HepG2 (cell line): ENCODE measurements at regions of chrX and their contacts with region 1.

Region 1: GRCh38 chrX:48751343-48751742 is 10.2 kb upstream of the GLOD5 start:
- DNase-seq: no peak
- ATAC-seq: no peak
- H3K4me3 ChIP-seq: no peak overlapping the region
- H3K27ac ChIP-seq: no peak overlapping the region
- H3K4me1 ChIP-seq: peaks cover 52% of the 10 kb centered on the region
- H3K27me3 ChIP-seq: no peaks in the 10 kb centered on the region
- CTCF ChIP-seq: no peak
- EP300 ChIP-seq: no peak
- POLR2A ChIP-seq: no peak
- RAD21 ChIP-seq: no peak

Region 2: GRCh38 chrX:48631350-48632090 is 119.8 kb before region 1 on chrX:
- CTCF ChIA-PET with region 1: no interaction called
- POLR2A ChIA-PET with region 1: no interaction called
- in situ Hi-C with region 1: no loop called
- intact Hi-C with region 1: loop called (anchors 10 kb)
- DNase-seq: peak; percentile 85
- ATAC-seq: peak; percentile 98
- H3K4me3 ChIP-seq: peak overlapping the region; percentile 4 to 46 (median 16); a peak in 3 of 6 replicates
- H3K27ac ChIP-seq: no peak overlapping the region
- H3K4me1 ChIP-seq: peaks cover 9% of the 10 kb centered on the region
- H3K27me3 ChIP-seq: no peaks in the 10 kb centered on the region
- CTCF ChIP-seq: peak; percentile 78
- EP300 ChIP-seq: peak in 1 of 2 experiments; percentile 51; a peak in 2 of 4 replicates
- POLR2A ChIP-seq: no peak
- RAD21 ChIP-seq: peak; percentile 84

Region 3: GRCh38 chrX:48957827-48958634 is 206.7 kb after region 1 on chrX:
- CTCF ChIA-PET with region 1: no interaction called
- POLR2A ChIA-PET with region 1: no interaction called
- in situ Hi-C with region 1: no loop called
- intact Hi-C with region 1: no loop called
- DNase-seq: peak; percentile 93
- ATAC-seq: peak; percentile 88
- H3K4me3 ChIP-seq: peak overlapping the region; percentile 62 to 81 (median 76); a peak in 5 of 6 replicates
- H3K27ac ChIP-seq: peak overlapping the region; percentile 98
- H3K4me1 ChIP-seq: peaks cover 67% of the 10 kb centered on the region
- H3K27me3 ChIP-seq: no peaks in the 10 kb centered on the region
- CTCF ChIP-seq: no peak
- EP300 ChIP-seq: no peak; a peak in 1 of 4 replicates
- POLR2A ChIP-seq: peak in 1 of 2 experiments; percentile 67; a peak in 2 of 4 replicates
- RAD21 ChIP-seq: no peak